Mammary epithelial cell (primary cell): ENCODE measurements at regions of chr3 and their contacts with region 1.

Region 1: GRCh38 chr3:187807086-187807862 is 62.0 kb upstream of the BCL6 start:
- DNase-seq: peak; percentile 85
- H3K4me3 ChIP-seq: no peak overlapping the region
- H3K27ac ChIP-seq: no peak overlapping the region
- H3K4me1 ChIP-seq: peaks cover 43% of the 10 kb centered on the region
- H3K27me3 ChIP-seq: no peaks in the 10 kb centered on the region
- CTCF ChIP-seq: no peak

Region 2: GRCh38 chr3:187767266-187768012 is 39.8 kb before region 1 on chr3:
- CTCF ChIA-PET with region 1: no interaction called
- dilution Hi-C with region 1: no loop called
- in situ Hi-C with region 1: no loop called
- intact Hi-C with region 1: loop called (anchors 1 kb)
- DNase-seq: peak; percentile 80
- H3K4me3 ChIP-seq: no peak overlapping the region
- H3K27ac ChIP-seq: no peak overlapping the region
- H3K4me1 ChIP-seq: peaks cover 20% of the 10 kb centered on the region
- H3K27me3 ChIP-seq: no peaks in the 10 kb centered on the region
- CTCF ChIP-seq: no peak

Region 3: DNA sequence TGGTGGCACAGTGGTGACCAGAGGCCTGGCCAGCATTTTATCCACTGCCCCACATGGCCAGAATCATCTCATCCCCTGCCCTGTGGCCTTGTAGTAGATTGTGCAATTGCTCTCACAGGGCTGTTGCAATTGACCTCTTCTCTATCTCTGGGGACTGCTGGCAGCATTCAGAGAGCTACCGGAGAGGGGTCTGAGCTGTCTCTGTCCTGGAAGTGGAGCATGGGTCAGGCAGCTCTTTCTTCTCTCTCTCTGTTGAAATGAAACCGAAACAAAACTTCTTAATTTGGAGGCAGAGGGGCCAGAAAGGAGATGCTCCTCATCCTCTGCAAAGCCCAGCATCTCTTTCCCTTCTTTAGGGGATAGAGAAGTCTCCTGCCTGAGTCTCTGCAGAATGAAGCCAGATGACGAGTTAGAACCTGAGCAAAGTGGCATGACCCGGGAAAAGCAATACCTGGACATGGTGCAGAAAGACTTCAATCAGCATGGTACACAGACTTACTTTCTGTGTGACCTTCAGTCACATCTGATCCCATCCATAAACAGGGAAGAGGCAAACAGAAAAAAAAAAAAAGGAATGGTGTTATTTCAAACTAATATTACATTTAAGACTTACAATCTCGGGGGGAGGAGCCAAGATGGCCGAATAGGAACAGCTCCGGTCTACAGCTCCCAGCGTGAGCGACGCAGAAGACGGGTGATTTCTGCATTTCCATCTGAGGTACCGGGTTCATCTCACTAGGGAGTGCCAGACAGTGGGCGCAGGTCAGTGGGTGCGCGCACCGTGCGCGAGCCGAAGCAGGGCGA is 82.5 kb after region 1 on chr3:
- CTCF ChIA-PET with region 1: no interaction called
- dilution Hi-C with region 1: loop called (anchors 5 kb)
- in situ Hi-C with region 1: no loop called
- intact Hi-C with region 1: no loop called
- DNase-seq: no peak
- H3K4me3 ChIP-seq: no peak overlapping the region
- H3K27ac ChIP-seq: no peak overlapping the region
- H3K4me1 ChIP-seq: no peaks in the 10 kb centered on the region
- H3K27me3 ChIP-seq: no peaks in the 10 kb centered on the region
- CTCF ChIP-seq: no peak